ENCODE measurements at regions of chr6 and their contacts with region 1.

Region 1: GRCh38 chr6:132860254-132860653 is 45.9 kb downstream of the RPS12 start:
- DNase-seq: no peak

Region 2: DNA sequence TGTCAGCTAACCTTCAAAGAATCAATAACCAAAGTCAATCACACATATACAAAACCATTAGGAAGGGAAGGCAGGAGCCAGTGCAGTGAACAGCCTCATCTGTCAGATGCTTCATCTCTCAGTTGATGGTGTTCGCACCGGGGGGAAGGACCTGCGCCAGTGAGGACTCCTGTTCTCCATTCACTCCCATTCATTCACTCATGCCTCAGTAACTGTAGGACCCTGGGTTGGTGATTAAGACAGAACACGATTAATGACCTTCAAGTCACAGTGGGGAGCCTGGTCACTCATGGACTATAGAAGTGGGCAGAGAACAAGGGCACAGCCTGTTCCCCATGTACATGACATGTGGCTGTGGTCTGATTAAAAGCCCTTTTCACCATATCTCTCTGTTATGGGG is 67.4 kb after region 1 on chr6:
- intact Hi-C with region 1: loop called in 1 of 2 experiments (anchors 2 kb)
- DNase-seq: no peak

Measured in posterior vena cava (tissue), 2 donors.